ENCODE measurements at regions of chr1 and their contacts with region 1.

Region 1: GRCh38 chr1:88537787-88538186 is 146.3 kb upstream of the PKN2 start:
- DNase-seq: no peak
- ATAC-seq: no peak
- H3K4me3 ChIP-seq: no peak overlapping the region
- H3K27ac ChIP-seq: no peak overlapping the region
- H3K4me1 ChIP-seq: no peaks in the 10 kb centered on the region
- H3K27me3 ChIP-seq: no peaks in the 10 kb centered on the region
- CTCF ChIP-seq: no peak

Region 2: GRCh38 chr1:88327391-88328267 is 210.2 kb before region 1 on chr1:
- CTCF ChIA-PET with region 1: no interaction called
- POLR2A ChIA-PET with region 1: no interaction called
- intact Hi-C with region 1: loop called (anchors 10 kb)
- DNase-seq: peak; percentile 88
- ATAC-seq: peak; percentile 98
- H3K4me3 ChIP-seq: no peak overlapping the region
- H3K27ac ChIP-seq: peak overlapping the region; percentile 42
- H3K4me1 ChIP-seq: peaks cover 22% of the 10 kb centered on the region
- H3K27me3 ChIP-seq: no peaks in the 10 kb centered on the region
- CTCF ChIP-seq: no peak

Measured in PC-3 (cell line).